Vagina (tissue), 2 donors: ENCODE measurements at regions of chr11 and their contacts with region 1.

Region 1: DNA sequence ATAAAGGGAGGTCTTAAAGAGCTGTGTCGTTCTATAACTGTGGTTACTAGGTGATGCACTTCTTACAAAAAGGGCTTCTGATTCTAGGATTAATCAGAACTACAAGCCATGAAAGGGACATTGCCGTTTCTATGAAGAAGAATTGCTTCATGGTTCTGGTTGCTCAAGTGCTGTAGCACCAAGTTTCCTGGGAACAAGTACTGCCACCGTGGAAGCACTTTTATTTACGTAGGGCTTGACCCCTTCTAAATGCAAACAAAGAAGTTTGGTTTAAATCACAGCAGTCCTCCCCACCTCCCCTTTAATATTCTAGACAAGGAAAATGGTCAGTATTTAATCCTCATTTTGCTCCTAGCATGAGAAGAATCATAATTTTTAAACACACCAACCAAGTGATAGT is 9.8 kb downstream of the YAP1 start:
- DNase-seq: no peak
- H3K4me3 ChIP-seq: no peak overlapping the region
- H3K27ac ChIP-seq: no peak overlapping the region
- H3K4me1 ChIP-seq: peaks cover 66% of the 10 kb centered on the region
- H3K27me3 ChIP-seq: no peaks in the 10 kb centered on the region
- CTCF ChIP-seq: no peak
- POLR2A ChIP-seq: no peak

Region 2: GRCh38 chr11:102177974-102178631 is 58.1 kb after region 1 on chr11:
- intact Hi-C with region 1: loop called (anchors 10 kb)
- DNase-seq: no peak
- H3K4me3 ChIP-seq: no peak overlapping the region
- H3K27ac ChIP-seq: peak overlapping the region; percentile 59
- H3K4me1 ChIP-seq: peaks cover 23% of the 10 kb centered on the region
- H3K27me3 ChIP-seq: no peaks in the 10 kb centered on the region
- CTCF ChIP-seq: no peak
- POLR2A ChIP-seq: no peak

Region 3: GRCh38 chr11:102410382-102410784 is 290.4 kb after region 1 on chr11:
- intact Hi-C with region 1: no loop called
- DNase-seq: no peak
- H3K4me3 ChIP-seq: no peak overlapping the region
- H3K27ac ChIP-seq: no peak overlapping the region
- H3K4me1 ChIP-seq: peaks cover 25% of the 10 kb centered on the region
- H3K27me3 ChIP-seq: no peaks in the 10 kb centered on the region
- CTCF ChIP-seq: no peak
- POLR2A ChIP-seq: no peak